ENCODE measurements at regions of chr1 and their contacts with region 1.

Region 1: DNA sequence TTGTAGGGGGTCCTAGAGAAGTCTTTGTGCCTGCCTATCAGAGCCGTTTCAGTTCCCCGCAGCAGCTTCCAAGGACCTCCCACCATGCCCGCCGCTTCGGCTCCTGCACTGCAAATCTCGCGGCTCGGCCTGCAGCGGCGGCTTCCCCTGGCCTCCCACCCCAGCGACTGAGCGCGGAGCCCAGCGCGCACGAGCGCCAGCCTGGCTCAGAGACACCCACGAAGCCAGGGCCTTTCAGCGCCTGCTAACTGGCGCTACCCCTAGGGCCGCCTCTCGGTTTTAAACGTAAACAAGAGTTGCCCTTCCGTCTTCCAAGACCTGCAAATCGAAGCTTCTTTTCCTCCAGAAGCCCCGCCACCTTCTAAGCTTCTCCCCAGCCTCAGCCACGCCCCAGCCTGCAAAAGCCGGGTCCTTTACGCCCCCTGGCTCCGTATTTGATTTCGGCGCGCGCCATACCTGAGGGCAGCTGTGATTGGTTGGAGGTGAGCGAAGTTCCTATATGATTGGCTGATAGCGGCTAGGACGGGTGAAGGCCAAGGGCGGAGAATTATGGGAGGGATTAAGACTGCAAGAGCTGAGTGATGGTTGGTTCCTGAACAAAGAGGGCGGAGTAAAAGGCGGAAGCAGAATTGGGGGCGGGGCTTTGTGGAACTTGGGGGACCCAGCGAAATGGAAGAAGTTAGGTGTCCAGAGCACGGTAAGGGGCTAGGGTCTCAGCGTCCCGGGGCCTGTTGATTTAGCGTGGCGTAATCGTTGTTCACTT is at the start of gene TTF2:
- DNase-seq: peak; percentile 87 to 96 (median 94)
- ATAC-seq: peak; percentile 93 to 98 (median 97)
- H3K4me3 ChIP-seq: peak within 1 kb of the TSS; percentile 62 to 82 (median 72)
- H3K27ac ChIP-seq: peak within 1 kb of the TSS; percentile 60 to 83 (median 76)
- H3K4me1 ChIP-seq: peaks cover 0 to 6% (median 0%) of the 10 kb centered on the region in 3 donors
- H3K27me3 ChIP-seq: no peaks in the 10 kb centered on the region
- CTCF ChIP-seq: no peak
- total RNA-seq, gene TTF2: 3.5 to 16.5 (median 5.5) TPM

Region 2: GRCh38 chr1:116737020-116737854 is 322.6 kb before region 1 on chr1:
- intact Hi-C with region 1: loop called in 1 of 3 experiments (anchors 5 kb)
- DNase-seq: peak; percentile 25 to 71 (median 52)
- ATAC-seq: peak; percentile 82 to 94 (median 92)
- H3K4me3 ChIP-seq: no peak overlapping the region
- H3K27ac ChIP-seq: no peak overlapping the region
- H3K4me1 ChIP-seq: no peaks in the 10 kb centered on the region
- H3K27me3 ChIP-seq: no peaks in the 10 kb centered on the region
- CTCF ChIP-seq: peak in 3 of 4 donors; percentile 57 to 63 (median 61)

Region 3: GRCh38 chr1:116853670-116854402 is 206.0 kb before region 1 on chr1:
- intact Hi-C with region 1: loop called in 1 of 3 experiments (anchors 10 kb)
- DNase-seq: peak in 3 of 6 donors; percentile 63 to 64 (median 63)
- ATAC-seq: peak; percentile 85 to 94 (median 89)
- H3K4me3 ChIP-seq: no peak overlapping the region
- H3K27ac ChIP-seq: peak overlapping the region in 3 of 4 donors; percentile 49 to 84 (median 83)
- H3K4me1 ChIP-seq: peaks cover 21 to 34% (median 34%) of the 10 kb centered on the region in 3 donors
- H3K27me3 ChIP-seq: no peaks in the 10 kb centered on the region
- CTCF ChIP-seq: no peak

Region 4: DNA sequence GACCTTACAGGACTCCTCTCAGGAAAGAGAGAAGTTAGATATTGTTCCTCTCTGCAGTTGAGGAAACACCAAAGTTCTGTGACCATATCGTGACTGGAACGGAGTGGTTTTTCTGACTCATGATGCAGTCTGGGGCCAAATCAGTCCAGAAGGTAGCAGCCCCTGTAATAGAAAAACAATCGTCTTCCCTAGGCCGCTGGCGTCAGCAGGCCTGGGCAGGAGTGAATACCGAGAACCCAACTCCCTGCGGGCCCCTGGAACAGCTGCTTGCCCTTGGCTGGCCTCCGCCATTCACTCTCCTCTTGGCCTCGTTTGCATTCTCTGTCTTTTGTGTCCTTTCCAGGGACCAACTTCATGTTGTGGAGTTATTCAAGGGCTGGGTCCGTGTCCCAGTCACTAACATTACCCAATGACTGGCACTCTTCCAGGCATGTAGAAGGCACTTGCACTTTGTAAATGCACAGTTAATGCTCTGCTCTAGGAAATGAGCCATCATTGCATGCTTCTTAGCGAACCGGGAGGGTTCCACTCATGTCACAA is 69.2 kb before region 1 on chr1:
- intact Hi-C with region 1: loop called in 1 of 3 experiments (anchors 10 kb)
- DNase-seq: peak in 3 of 6 donors; percentile 10 to 33 (median 29)
- ATAC-seq: peak in 3 of 4 donors; percentile 29 to 61 (median 37)
- H3K4me3 ChIP-seq: no peak overlapping the region
- H3K27ac ChIP-seq: peak overlapping the region in 2 of 4 donors; percentile 8 to 21
- H3K4me1 ChIP-seq: peaks cover 0 to 29% (median 8%) of the 10 kb centered on the region in 3 donors
- H3K27me3 ChIP-seq: no peaks in the 10 kb centered on the region
- CTCF ChIP-seq: no peak

Region 5: DNA sequence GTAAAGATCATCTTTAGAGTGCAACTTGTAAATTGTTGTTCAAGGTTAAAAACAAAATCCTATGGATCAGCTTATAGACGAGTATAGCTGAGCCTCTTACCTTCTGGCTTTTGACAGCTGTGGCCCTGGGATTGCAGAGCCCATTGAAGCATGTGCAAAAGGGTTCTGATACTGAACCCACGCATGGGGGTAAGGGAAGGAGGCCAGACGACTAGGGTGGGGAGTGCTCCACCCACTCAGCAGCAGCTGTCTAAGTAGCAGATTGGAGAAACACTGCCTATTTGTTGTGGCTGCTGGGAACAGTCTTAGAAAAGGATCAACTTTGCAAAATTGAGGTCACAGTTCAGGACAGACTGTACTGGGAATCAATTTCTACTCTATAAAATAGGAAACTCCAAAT is 42.2 kb before region 1 on chr1:
- intact Hi-C with region 1: no loop called
- DNase-seq: no peak
- ATAC-seq: no peak
- H3K4me3 ChIP-seq: no peak overlapping the region
- H3K27ac ChIP-seq: no peak overlapping the region
- H3K4me1 ChIP-seq: no peaks in the 10 kb centered on the region
- H3K27me3 ChIP-seq: no peaks in the 10 kb centered on the region
- CTCF ChIP-seq: no peak

Region 6: GRCh38 chr1:117121776-117122697 is 62.2 kb after region 1 on chr1:
- intact Hi-C with region 1: loop called in 1 of 3 experiments (anchors 10 kb)
- DNase-seq: peak; percentile 96 to 97 (median 97)
- ATAC-seq: peak; percentile 90 to 97 (median 94)
- H3K4me3 ChIP-seq: peak overlapping the region; percentile 46 to 62 (median 57)
- H3K27ac ChIP-seq: peak overlapping the region; percentile 86 to 96 (median 91)
- H3K4me1 ChIP-seq: peaks cover 4 to 14% (median 8%) of the 10 kb centered on the region in 3 donors
- H3K27me3 ChIP-seq: no peaks in the 10 kb centered on the region
- CTCF ChIP-seq: peak; percentile 41 to 67 (median 52)

Region 7: GRCh38 chr1:117284399-117285215 is 224.7 kb after region 1 on chr1:
- intact Hi-C with region 1: loop called in 2 of 3 experiments (anchors 5 to 10 kb)
- DNase-seq: no peak
- ATAC-seq: peak; percentile 78 to 95 (median 91)
- H3K4me3 ChIP-seq: no peak overlapping the region
- H3K27ac ChIP-seq: no peak overlapping the region
- H3K4me1 ChIP-seq: no peaks in the 10 kb centered on the region
- H3K27me3 ChIP-seq: no peaks in the 10 kb centered on the region
- CTCF ChIP-seq: peak in 3 of 4 donors; percentile 40 to 41 (median 41)